Aorta (tissue), 5 donors: ENCODE measurements at regions of chr9 and their contacts with region 1.

Region 1: DNA sequence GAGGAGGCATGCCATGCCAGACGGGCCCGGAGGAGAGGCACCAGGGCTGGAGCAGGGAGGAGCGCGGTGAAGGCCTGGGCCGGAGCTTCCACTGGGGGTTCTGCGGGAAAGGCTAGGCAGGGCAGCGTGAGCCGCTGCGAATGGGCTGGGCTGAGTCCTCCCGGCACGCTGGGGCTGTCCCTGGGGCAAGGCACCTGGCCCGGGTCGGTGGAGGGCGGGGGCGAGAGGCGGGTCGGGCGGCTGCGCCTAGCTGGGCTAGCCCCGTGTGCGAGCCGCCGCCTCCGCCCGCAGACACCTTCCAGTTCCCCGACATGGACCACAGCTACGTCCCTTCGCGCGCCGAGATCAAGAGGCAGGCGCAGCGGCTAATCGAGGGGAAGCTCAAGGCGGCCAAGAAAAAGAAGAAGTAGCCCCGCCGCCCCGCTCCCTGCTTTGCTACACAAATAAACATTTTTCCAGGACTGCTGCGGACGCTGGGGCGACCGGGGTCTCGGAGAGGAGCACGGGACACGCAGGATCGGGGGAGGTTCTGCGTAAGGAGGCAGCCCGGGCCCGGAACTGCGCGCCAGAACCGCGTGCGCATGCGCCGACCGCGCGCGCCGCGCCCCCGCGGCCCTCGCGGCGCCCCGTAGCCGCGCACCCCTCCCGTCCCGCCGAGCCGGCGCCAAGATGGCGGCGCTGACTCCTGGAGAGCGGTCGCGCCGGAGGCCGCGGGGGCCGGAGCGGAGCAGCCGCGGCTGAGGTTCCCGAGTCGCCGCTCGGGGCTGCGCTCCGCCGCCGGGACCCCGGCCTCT is at the start of gene RABL6:
- DNase-seq: peak; percentile 86 to 93
- ATAC-seq: peak; percentile 90
- H3K4me3 ChIP-seq: peak within 1 kb of the TSS; percentile 91 to 92
- H3K27ac ChIP-seq: peak within 1 kb of the TSS in 1 of 2 donors; percentile 39
- H3K4me1 ChIP-seq: no peaks in the 10 kb centered on the region
- H3K27me3 ChIP-seq: no peaks in the 10 kb centered on the region
- total RNA-seq, gene RABL6: 47.2 to 52.0 TPM

Region 2: DNA sequence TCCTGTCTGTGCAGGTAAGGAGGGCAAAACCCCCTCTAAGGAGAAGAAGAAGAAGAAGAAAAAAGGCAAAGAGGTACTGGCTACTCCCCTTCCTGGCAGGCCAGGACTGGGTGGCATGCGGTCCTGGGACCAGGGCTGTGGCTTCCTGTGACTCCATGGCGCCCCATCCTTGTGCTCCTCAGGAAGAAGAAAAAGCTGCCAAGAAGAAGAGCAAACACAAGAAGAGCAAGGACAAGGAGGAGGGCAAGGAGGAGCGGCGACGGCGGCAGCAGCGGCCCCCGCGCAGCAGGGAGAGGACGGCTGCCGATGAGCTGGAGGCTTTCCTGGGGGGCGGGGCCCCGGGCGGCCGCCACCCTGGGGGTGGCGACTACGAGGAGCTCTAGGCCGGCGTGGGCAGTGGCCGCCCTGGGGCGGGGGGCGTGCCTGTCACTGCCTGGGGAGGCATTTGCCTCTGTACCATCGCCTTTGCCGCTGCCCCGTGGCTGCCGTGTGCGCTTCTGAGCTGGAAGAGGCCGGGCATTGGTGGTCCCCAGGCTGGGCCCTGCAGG is 32.7 kb after region 1 on chr9:
- intact Hi-C with region 1: loop called in 1 of 2 experiments (anchors 5 kb)
- DNase-seq: no peak
- ATAC-seq: no peak
- H3K4me3 ChIP-seq: no peak overlapping the region
- H3K27ac ChIP-seq: no peak overlapping the region
- H3K4me1 ChIP-seq: no peaks in the 10 kb centered on the region
- H3K27me3 ChIP-seq: no peaks in the 10 kb centered on the region

Region 3: GRCh38 chr9:136868644-136869043 is 61.2 kb after region 1 on chr9:
- intact Hi-C with region 1: no loop called
- DNase-seq: no peak
- ATAC-seq: no peak
- H3K4me3 ChIP-seq: no peak overlapping the region
- H3K27ac ChIP-seq: no peak overlapping the region
- H3K4me1 ChIP-seq: no peaks in the 10 kb centered on the region
- H3K27me3 ChIP-seq: no peaks in the 10 kb centered on the region